Endothelial cell of umbilical vein (primary cell): ENCODE measurements at regions of chr1 and their contacts with region 1.

Region 1: DNA sequence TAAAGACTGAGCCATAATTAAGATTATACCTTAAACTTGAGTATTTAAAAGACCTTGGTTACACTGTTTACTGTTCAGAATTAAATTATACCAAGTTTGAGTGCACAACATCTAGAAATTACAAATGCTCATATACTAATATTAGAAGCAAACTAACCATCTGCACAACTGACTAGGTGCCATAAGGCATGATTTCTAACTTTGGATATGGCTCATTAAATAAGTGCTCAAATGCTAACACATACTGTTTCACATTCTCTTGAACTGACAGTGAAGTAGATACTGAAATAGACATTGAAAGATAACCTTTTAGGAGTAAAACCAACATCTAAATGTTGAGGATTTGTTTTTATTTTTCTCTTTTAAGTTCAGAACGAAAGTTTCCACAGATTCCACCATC is 74.1 kb downstream of the PRKAA2 start:
- DNase-seq: no peak
- H3K4me3 ChIP-seq: no peak overlapping the region
- H3K27ac ChIP-seq: no peak overlapping the region
- H3K4me1 ChIP-seq: no peaks in the 10 kb centered on the region
- H3K27me3 ChIP-seq: no peaks in the 10 kb centered on the region
- CTCF ChIP-seq: no peak
- POLR2A ChIP-seq: no peak

Region 2: DNA sequence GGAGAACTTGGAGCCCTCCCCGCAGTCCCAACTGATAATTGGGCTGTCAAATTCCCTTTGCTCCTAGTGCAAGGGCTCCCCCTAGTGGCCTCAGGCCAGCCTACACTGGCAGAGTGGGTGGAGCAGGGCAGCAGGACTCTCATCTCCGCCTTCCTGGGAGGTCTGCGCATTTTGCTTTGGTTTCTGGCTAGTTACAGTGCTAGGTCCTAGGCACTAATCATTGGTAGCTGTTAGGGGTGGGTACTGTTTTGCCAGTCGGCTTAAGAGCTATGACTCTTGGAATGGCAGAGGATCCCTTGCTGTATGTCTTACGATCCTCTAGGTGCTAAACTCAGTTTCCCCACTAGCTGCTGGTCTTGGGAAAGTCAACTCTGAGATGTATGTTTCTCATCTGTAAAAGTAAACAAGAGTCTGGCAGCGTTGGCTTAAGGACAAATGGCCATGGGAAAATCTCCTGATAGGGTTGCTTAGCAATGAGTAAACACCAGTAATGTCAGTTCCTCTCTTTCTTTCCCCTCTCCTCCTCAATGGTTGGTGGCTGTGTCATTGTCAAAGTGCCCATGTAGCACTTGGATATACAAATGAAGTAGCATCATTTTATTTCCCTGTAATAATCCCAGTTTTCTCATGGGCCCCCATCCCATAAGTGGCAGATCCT is 102.1 kb after region 1 on chr1:
- CTCF ChIA-PET with region 1: no interaction called
- POLR2A ChIA-PET with region 1: no interaction called
- dilution Hi-C with region 1: no loop called
- intact Hi-C with region 1: loop called (anchors 2 kb)
- DNase-seq: peak; percentile 62
- H3K4me3 ChIP-seq: no peak overlapping the region
- H3K27ac ChIP-seq: no peak overlapping the region
- H3K4me1 ChIP-seq: no peaks in the 10 kb centered on the region
- H3K27me3 ChIP-seq: no peaks in the 10 kb centered on the region
- CTCF ChIP-seq: peak; percentile 93 to 95
- POLR2A ChIP-seq: no peak